Posterior vena cava (tissue), 2 donors: ENCODE measurements at regions of chr10 and their contacts with region 1.

Region 1: GRCh38 chr10:79239924-79240581 is 107.2 kb upstream of the PPIF start:
- DNase-seq: no peak

Region 2: GRCh38 chr10:79335470-79336235 is 95.6 kb after region 1 on chr10:
- intact Hi-C with region 1: loop called in 1 of 2 experiments (anchors 1 kb)
- DNase-seq: peak; percentile 76